ENCODE measurements at regions of chr7 and their contacts with region 1.

Region 1: GRCh38 chr7:151759591-151760042 is 117.3 kb downstream of the PRKAG2 start:
- DNase-seq: peak; percentile 78
- ATAC-seq: peak; percentile 79
- H3K4me3 Mint-ChIP-seq: no peak overlapping the region
- H3K27ac Mint-ChIP-seq: no peak overlapping the region
- H3K4me1 Mint-ChIP-seq: peaks cover 35% of the 10 kb centered on the region
- H3K27me3 Mint-ChIP-seq: peaks cover 8% of the 10 kb centered on the region
- CTCF ChIP-seq: peak; percentile 88

Region 2: GRCh38 chr7:151575341-151575870 is 184.2 kb before region 1 on chr7:
- CTCF ChIA-PET with region 1: interaction called, 13 read pairs
- POLR2A ChIA-PET with region 1: no interaction called
- DNase-seq: no peak
- ATAC-seq: no peak
- H3K4me3 Mint-ChIP-seq: no peak overlapping the region
- H3K27ac Mint-ChIP-seq: no peak overlapping the region
- H3K4me1 Mint-ChIP-seq: no peaks in the 10 kb centered on the region
- H3K27me3 Mint-ChIP-seq: no peaks in the 10 kb centered on the region
- CTCF ChIP-seq: no peak

Region 3: DNA sequence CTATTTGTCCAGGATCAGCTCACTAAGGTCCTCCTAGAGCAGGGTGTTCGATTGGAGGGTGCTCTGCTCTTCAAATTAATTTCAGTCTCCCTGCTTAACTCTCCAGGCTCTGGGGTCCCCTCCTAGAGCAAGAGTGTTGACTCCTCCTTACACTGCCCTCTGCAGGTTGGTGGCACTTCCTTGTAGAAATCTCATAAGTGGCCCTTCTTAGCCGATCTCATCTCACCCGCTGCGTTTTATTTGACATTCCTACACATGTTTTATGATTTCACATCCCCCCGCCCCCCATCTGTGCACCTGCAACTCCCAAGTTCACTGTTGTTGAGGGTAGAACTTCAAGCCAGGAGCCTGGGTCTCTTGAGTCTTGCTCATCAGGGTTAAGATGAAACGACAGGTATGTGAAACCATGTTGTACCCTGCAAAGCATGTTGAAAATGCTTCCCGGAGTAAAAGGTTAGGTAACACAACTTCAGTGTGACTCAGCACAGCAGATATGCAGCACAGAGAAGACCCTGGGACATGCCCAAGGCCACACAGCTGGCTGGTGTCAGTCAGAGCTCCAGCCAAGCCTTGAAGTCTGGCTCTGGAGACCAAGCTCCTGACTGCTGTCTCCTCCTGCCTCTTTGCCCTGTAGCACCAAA is 53.9 kb before region 1 on chr7:
- CTCF ChIA-PET with region 1: interaction called, 11 read pairs
- POLR2A ChIA-PET with region 1: no interaction called
- DNase-seq: peak; percentile 49
- ATAC-seq: peak; percentile 90
- H3K4me3 Mint-ChIP-seq: no peak overlapping the region
- H3K27ac Mint-ChIP-seq: no peak overlapping the region
- H3K4me1 Mint-ChIP-seq: peaks cover 4% of the 10 kb centered on the region
- H3K27me3 Mint-ChIP-seq: peaks cover 8% of the 10 kb centered on the region; the same call in 1 of the 2 replicates
- CTCF ChIP-seq: no peak

Region 4: GRCh38 chr7:151736403-151736909 is 23.2 kb before region 1 on chr7:
- CTCF ChIA-PET with region 1: interaction called, 23 read pairs
- POLR2A ChIA-PET with region 1: no interaction called
- DNase-seq: no peak
- ATAC-seq: peak; percentile 74
- H3K4me3 Mint-ChIP-seq: peak overlapping the region; percentile 25
- H3K27ac Mint-ChIP-seq: no peak overlapping the region
- H3K4me1 Mint-ChIP-seq: peaks cover 24% of the 10 kb centered on the region
- H3K27me3 Mint-ChIP-seq: no peaks in the 10 kb centered on the region; the same call in 1 of the 2 replicates
- CTCF ChIP-seq: no peak

Region 5: DNA sequence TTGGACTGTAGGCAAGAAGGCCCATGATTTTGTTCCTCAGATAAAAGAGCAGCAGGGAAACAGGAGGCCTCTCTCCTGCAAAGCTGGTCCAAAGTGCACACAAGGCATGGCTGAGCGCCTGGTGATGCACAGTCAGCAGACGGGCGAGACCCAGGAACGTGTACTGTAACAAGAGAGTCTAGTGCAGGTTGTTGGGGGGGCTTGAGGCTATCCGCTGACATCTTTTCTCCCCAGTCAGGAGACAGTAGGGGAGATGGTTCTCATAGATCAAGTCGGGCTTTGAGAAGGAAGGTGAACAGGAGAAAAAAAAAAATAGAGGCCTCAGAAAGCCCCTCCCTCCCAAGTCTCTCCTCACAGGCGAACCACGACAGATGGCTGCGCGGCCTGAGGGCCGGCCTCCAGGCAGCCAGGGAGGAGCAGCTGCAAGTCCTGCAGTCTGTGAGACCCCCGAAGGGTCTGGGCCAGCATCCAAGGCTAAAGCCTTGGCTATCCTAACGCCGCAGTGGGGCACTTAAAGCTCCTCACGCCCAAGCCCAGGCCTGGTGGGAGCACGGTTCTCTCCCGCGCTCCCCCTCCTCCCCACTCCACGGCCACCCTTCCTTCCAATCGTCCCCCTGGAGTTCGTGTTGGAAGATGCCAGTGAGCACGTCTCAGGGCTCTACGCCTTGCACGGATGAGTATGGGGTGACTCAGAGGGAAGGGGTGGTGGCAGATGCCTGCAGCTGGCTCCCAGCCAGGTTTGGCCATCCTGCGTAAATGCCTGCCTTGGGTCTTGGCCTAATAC is 49.0 kb after region 1 on chr7:
- CTCF ChIA-PET with region 1: no interaction called
- POLR2A ChIA-PET with region 1: no interaction called
- DNase-seq: no peak
- ATAC-seq: no peak
- H3K4me3 Mint-ChIP-seq: no peak overlapping the region
- H3K27ac Mint-ChIP-seq: no peak overlapping the region
- H3K4me1 Mint-ChIP-seq: peaks cover 5% of the 10 kb centered on the region
- H3K27me3 Mint-ChIP-seq: peaks cover 10% of the 10 kb centered on the region
- CTCF ChIP-seq: no peak

Region 6: GRCh38 chr7:151968357-151968756 is 208.7 kb after region 1 on chr7:
- CTCF ChIA-PET with region 1: no interaction called
- POLR2A ChIA-PET with region 1: no interaction called
- DNase-seq: no peak
- ATAC-seq: no peak
- H3K4me3 Mint-ChIP-seq: no peak overlapping the region
- H3K27ac Mint-ChIP-seq: no peak overlapping the region
- H3K4me1 Mint-ChIP-seq: 0 out of 2 replicates have a peak, but pooled peaks cover 5% of the 10 kb centered on the region
- H3K27me3 Mint-ChIP-seq: no peaks in the 10 kb centered on the region
- CTCF ChIP-seq: no peak

Region 7: GRCh38 chr7:151992375-151992774 is 232.8 kb after region 1 on chr7:
- CTCF ChIA-PET with region 1: no interaction called
- POLR2A ChIA-PET with region 1: no interaction called
- DNase-seq: peak; percentile 73
- ATAC-seq: peak; percentile 97
- H3K4me3 Mint-ChIP-seq: no peak overlapping the region
- H3K27ac Mint-ChIP-seq: peak overlapping the region; percentile 55; the same call in 1 of the 2 replicates
- H3K4me1 Mint-ChIP-seq: peaks cover 20% of the 10 kb centered on the region
- H3K27me3 Mint-ChIP-seq: no peaks in the 10 kb centered on the region
- CTCF ChIP-seq: no peak